Cardiac septum (tissue), 1 donor: ENCODE measurements at regions of chr6 and their contacts with region 1.

Region 1: DNA sequence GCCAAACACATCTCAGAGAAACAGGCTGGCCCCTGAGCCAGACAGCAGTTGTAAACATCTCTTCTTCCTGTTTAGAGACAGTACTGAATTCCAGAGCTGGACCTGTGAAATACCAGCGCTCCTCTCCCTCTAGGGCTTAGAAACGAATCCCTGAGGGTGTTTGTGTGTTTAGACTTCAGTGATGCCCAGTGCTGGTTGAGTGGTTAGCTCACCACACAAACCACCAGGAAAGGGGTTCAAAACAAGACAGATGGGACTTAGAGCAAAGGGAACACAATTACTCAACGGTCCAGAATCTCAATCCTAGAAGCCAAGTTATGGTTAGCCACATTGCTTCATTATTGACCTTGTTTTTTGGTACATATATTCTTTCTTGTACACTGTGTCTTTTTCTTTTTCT is 108.7 kb upstream of the TMEM170B start:
- DNase-seq: no peak

Region 2: GRCh38 chr6:11386323-11386722 is 42.6 kb before region 1 on chr6:
- intact Hi-C with region 1: loop called (anchors 5 kb)
- DNase-seq: no peak